ENCODE measurements at regions of chr17 and their contacts with region 1.

Region 1: GRCh38 chr17:45745601-45746494 is 38.3 kb upstream of the CRHR1 start:
- DNase-seq: no peak
- ATAC-seq: no peak
- H3K4me3 ChIP-seq: no peak overlapping the region
- H3K27ac ChIP-seq: no peak overlapping the region
- H3K4me1 ChIP-seq: no peaks in the 10 kb centered on the region
- H3K27me3 ChIP-seq: peaks cover 3% of the 10 kb centered on the region; the same call in 1 of the 2 replicates
- CTCF ChIP-seq: no peak

Region 2: DNA sequence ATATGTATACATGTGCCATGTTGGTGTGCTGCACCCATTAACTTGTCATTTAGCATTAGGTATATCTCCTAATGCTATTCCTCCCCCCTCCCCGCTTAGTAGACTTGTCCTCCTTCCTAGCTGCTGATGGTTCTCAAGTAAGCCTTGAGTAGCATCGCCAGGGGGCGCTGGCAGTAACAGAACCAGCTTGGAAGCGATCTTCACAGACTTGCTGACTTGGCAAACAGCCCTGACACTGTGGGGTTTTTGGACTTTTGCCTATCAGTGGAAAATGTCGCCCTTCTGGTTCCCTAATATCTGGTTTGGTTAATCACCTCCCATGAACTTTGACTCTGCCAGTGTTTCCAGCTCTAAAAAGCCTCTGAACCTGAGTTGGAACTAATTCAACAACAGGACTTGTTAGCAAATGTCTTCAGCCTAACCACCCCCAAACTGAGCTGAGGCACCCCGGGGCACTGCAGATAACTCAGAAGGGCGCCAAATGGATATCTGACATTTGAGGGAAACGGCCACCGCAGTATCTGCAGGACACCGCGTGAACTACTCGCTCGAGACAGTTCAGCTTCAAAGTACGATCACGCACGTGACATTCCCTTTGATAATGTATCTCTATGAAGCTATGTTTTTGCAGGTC is 468.5 kb before region 1 on chr17:
- CTCF ChIA-PET with region 1: no interaction called
- POLR2A ChIA-PET with region 1: interaction called, 12 read pairs
- in situ Hi-C with region 1: no loop called
- intact Hi-C with region 1: no loop called
- DNase-seq: peak; percentile 54
- ATAC-seq: 0 out of 2 replicates have a peak, but pooled peaks have one; percentile 47
- H3K4me3 ChIP-seq: no peak overlapping the region
- H3K27ac ChIP-seq: peak overlapping the region; percentile 77
- H3K4me1 ChIP-seq: peaks cover 38% of the 10 kb centered on the region
- H3K27me3 ChIP-seq: no peaks in the 10 kb centered on the region
- CTCF ChIP-seq: peak; percentile 84

Region 3: GRCh38 chr17:45841883-45842525 is 96.2 kb after region 1 on chr17:
- CTCF ChIA-PET with region 1: no interaction called
- POLR2A ChIA-PET with region 1: no interaction called
- in situ Hi-C with region 1: no loop called
- intact Hi-C with region 1: no loop called
- DNase-seq: no peak
- ATAC-seq: no peak
- H3K4me3 ChIP-seq: no peak overlapping the region
- H3K27ac ChIP-seq: no peak overlapping the region
- H3K4me1 ChIP-seq: no peaks in the 10 kb centered on the region
- H3K27me3 ChIP-seq: no peaks in the 10 kb centered on the region
- CTCF ChIP-seq: no peak

Measured in Panc1 (cell line).